Pancreas (tissue), 10 donors: ENCODE measurements at regions of chr6 and their contacts with region 1.

Region 1: GRCh38 chr6:111928139-111928538 is 54.9 kb upstream of the FYN start:
- DNase-seq: no peak
- ATAC-seq: no peak
- H3K4me3 ChIP-seq: no peak overlapping the region
- H3K27ac ChIP-seq: no peak overlapping the region
- H3K4me1 ChIP-seq: no peaks in the 10 kb centered on the region
- H3K27me3 ChIP-seq: no peaks in the 10 kb centered on the region
- CTCF ChIP-seq: no peak

Region 2: GRCh38 chr6:111967131-111967530 is 39.0 kb after region 1 on chr6:
- intact Hi-C with region 1: loop called in 1 of 3 experiments (anchors 2 kb)
- DNase-seq: no peak
- ATAC-seq: no peak
- H3K4me3 ChIP-seq: no peak overlapping the region
- H3K27ac ChIP-seq: no peak overlapping the region
- H3K4me1 ChIP-seq: no peaks in the 10 kb centered on the region
- H3K27me3 ChIP-seq: no peaks in the 10 kb centered on the region
- CTCF ChIP-seq: no peak

Region 3: DNA sequence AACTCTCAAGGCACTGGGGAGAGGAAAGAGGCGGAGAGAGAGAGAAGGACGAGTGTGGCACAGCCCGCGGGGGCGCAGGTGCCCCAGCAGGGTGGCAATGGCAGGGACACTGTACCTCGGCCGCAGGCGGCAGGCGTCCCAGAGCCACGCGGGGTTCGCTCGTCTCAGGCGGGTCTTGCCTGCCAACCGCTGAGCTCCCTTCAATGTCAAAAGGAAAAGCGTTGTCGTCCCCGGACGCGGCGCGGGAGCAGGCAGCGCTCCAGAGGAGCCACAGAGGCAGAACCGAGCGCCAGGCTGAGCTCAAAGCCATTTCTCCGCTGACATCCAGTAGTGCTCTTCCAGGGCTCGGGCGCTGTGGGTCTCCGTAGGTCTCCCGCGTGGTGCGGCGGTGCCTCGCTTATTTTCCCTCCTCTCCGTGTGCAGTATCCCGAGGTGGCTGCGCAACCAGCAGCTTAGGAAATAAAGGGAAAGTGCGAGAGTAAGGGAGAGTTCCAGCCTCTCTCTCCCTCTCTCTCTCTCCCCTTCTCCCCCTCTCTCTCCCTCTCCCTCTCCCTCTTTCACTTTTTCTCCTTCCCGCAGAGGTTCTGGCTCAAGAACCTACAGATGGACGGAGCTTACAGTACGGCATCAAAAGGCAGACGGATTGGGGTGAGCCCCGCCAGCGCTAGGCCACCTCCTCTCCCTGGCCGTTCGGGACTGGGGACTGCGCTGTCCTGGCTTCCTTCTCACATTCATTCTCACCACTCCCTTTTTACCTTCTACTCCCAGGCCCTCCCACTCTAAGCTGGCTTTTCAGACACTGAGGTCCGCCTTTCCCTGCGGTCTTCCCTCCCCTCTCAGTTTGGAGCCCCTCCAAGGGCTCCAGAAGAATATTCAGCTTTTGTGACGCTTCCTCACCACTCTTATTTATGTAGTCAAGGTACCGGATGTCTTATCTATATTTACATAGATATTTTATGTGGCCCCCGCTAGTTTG is 326.0 kb after region 1 on chr6 and contains the start of gene LAMA4:
- intact Hi-C with region 1: no loop called
- DNase-seq: peak in 5 of 6 donors; percentile 9 to 74 (median 33)
- ATAC-seq: peak; percentile 64 to 81 (median 74)
- H3K4me3 ChIP-seq: peak within 1 kb of the TSS; percentile 39 to 51 (median 46)
- H3K27ac ChIP-seq: peak within 1 kb of the TSS in 2 of 4 donors; percentile 1 to 37
- H3K4me1 ChIP-seq: peaks cover 0 to 2% (median 0%) of the 10 kb centered on the region in 3 donors
- H3K27me3 ChIP-seq: no peaks in the 10 kb centered on the region
- CTCF ChIP-seq: no peak
- total RNA-seq, gene LAMA4: 1.3 to 14.0 (median 5.0) TPM